Activated CD4-positive, alpha-beta T cell treated with anti-CD3 and anti-CD28 coated beads, Interleukin-2, amount 10 ng/mL, durations not matched to agents 24 days and 14 days (primary cell): ENCODE measurements at regions of chr2 and their contacts with region 1.

Region 1: DNA sequence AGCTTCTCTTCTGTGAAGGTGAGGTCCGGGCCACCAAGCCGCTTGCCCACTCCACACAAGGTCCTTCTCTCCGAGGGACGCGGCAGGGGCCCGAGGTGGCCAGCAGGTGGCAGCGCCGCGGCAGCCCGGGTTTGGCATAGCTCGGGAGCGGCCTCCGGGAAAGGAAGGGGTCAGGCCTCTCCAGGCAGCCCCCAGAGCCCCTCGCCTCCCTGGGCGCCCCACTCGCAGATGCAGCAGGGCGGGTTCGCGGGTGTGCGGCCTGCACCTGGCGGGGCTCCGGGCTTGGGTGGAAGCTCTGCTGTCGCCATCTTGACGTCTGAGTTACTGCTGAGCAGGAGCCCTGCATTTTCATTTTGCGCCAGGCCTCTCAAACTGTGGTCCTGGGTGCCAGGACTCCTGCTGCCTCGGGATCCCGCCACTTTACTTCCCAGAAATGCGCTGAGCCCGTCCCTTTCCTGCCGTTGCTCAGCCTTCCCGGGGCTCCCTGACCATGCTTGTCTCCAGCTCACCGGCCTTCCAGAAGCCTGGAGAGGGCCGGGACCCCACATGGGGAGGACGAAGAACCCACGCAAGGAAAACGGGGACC is 18.6 kb upstream of the NCL start:
- DNase-seq: peak; percentile 93
- H3K4me3 Mint-ChIP-seq: peak overlapping the region; percentile 84
- H3K27ac Mint-ChIP-seq: peak overlapping the region; percentile 94
- H3K4me1 Mint-ChIP-seq: peaks cover 10% of the 10 kb centered on the region
- H3K27me3 Mint-ChIP-seq: peaks cover 3% of the 10 kb centered on the region

Region 2: DNA sequence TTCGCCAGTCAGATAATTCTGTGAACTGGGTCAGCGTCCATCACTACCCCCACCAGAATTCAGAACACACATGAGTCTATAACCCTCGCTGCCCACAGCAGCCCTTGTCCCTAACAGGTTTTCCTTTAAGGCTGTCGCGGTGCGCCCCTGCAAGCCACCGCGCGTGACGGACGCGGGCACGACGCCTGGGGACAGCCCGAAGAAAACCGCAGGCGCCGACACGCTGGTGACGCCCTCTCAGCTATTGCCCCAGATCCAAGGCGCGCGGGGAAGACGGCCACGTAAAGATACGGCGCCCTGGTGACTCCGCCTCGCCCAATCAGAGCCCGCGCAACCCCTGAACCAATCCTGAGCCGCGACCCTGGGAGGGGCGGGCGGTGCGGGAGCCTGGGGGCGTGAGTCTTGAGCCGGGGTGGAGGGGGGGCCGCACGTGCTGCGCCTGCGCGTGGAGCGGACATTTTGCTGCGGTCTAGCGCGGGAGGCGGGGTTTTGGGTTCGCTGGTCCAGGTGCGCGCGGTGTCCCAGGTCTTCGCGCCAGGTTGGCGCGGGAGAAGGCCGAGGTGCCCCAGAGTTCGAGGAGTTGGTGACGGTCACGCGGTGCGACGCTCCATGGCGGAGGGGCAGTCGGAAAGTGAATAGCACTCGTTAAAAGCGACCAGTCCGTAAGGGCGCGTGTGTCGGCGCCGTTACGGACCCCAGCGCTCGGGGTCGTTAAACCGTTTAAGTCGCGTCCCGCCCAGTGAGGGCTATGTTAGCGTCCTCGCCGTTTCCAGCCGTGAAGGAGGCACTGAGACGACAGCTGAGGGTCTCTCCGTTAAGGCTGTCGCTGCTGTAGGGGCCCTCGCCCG is 31.4 kb after region 1 on chr2:
- intact Hi-C with region 1: loop called (anchors 2 kb)
- DNase-seq: peak; percentile 99
- H3K4me3 Mint-ChIP-seq: peak overlapping the region; percentile 94
- H3K27ac Mint-ChIP-seq: peak overlapping the region; percentile 97
- H3K4me1 Mint-ChIP-seq: peaks cover 13% of the 10 kb centered on the region
- H3K27me3 Mint-ChIP-seq: peaks cover 6% of the 10 kb centered on the region